ENCODE measurements at regions of chr1 and their contacts with region 1.

Region 1: GRCh38 chr1:208425126-208425525 is 180.9 kb upstream of the PLXNA2 start:
- DNase-seq: no peak

Region 2: GRCh38 chr1:208211921-208212843 is 212.9 kb before region 1 on chr1:
- intact Hi-C with region 1: no loop called
- DNase-seq: no peak

Region 3: DNA sequence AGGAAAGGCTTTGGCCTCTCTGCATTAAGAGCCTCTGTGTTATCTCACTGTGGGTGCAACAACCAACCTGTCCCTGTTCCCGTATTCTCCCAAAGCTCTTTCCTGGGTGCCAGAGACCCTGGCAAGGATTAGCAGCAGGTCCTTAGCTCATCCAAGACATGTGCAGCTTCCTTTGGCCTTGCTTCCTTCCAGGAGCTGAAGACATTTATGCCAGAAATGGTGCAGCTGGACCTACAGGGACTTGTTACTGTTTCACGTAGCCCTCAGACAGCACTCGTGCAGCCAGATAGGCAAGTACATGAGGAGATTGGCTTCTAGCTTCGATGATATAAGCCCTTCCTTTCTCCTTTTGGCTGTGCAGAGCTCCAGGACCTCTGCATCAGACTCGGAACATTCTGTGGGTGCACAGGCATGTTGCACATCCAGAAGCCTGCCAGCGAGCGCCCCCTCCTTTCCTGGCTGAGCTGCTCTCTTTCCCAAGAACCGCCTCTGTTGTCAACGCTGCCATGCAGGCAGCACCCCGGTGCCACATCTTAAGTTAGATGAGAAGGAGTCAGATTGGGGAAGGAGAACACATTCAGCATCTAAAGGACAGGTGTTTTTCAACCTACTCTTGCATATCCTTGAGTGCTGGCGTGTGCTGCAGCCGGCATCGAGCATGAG is 103.6 kb after region 1 on chr1:
- intact Hi-C with region 1: no loop called
- DNase-seq: no peak

Region 4: GRCh38 chr1:209250861-209251637 is 825.9 kb after region 1 on chr1:
- intact Hi-C with region 1: loop called in 1 of 2 experiments (anchors 5 kb)
- DNase-seq: no peak

Measured in posterior vena cava (tissue), 2 donors.